Naive thymus-derived CD4-positive, alpha-beta T cell (primary cell): ENCODE measurements at regions of chr12 and their contacts with region 1.

Region 1: DNA sequence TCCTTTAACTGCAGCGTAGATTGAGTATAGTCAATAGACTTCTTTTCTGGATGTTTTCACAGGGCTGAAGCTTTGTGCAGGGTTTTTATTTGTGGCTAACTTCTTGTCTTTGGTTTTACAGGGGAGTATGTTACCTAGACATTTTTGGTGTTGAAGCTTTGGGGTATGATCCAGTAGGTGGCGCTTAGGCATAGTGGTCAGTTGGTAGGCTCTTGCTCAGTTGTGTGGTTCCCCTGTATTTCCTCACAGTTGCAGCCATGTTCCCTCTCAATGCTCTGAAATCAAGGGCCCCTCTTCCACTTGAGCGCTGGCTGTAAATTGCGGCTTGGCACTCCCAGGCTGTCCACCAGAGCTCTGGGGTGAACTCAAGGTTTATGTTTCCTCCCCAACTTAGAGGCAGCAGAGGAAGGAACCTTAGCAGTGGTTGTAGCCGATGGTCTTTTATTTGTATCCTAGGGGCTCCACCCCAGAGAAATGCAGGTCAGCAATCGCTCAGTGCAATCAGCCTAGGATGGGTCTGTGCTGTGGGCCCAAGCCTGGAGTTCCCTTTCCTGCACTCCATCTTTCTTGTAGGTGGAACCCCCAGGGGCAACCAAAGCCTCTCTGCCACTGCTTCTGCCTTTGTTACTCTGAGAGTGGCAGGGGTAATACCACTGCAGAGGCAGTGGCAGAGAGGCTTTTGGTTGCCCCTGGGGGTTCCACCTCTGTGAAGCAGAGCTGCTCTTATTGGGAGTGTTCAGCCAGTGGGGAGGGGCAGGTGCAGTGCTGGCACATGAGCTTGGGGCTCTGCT is 55.1 kb downstream of the CMAS start:
- DNase-seq: peak in 6 of 9 donors; percentile 12 to 47 (median 40)
- ATAC-seq: peak; percentile 78
- H3K4me3 ChIP-seq: no peak overlapping the region
- H3K4me3 Mint-ChIP-seq: no peak overlapping the region
- H3K27ac ChIP-seq: no peak overlapping the region
- H3K27ac Mint-ChIP-seq: no peak overlapping the region
- H3K4me1 ChIP-seq: peaks cover 0 to 4% of the 10 kb centered on the region in 2 donors
- H3K4me1 Mint-ChIP-seq: peaks cover 0 to 15% (median 6%) of the 10 kb centered on the region in 7 donors
- H3K27me3 ChIP-seq: no peaks in the 10 kb centered on the region
- H3K27me3 Mint-ChIP-seq: peaks cover 0 to 25% (median 0%) of the 10 kb centered on the region in 5 donors

Region 2: DNA sequence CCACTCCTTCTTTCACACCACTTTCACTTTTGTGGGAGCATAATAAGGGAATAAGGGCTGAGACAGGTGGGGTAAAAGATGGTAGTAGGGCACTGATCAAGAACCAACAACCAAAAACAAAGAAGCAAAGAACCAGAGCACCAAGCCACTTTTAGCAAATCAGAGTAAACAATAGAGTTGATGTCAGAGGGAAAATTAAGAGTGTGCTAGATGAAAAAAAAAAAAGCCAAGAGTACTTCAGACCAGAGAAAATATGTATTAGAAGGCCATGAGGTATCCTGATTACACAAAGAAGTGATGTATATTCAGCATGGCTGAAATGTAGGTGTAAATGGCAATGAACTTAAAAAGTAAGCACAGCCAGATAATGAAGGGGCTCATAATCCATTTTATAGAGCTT is 235.3 kb before region 1 on chr12:
- CTCF ChIA-PET with region 1: no interaction called
- POLR2A ChIA-PET with region 1: no interaction called
- intact Hi-C with region 1: no loop called
- DNase-seq: no peak
- ATAC-seq: no peak
- H3K4me3 ChIP-seq: no peak overlapping the region
- H3K4me3 Mint-ChIP-seq: no peak overlapping the region
- H3K27ac ChIP-seq: no peak overlapping the region
- H3K27ac Mint-ChIP-seq: no peak overlapping the region
- H3K4me1 ChIP-seq: no peaks in the 10 kb centered on the region
- H3K4me1 Mint-ChIP-seq: no peaks in the 10 kb centered on the region
- H3K27me3 ChIP-seq: no peaks in the 10 kb centered on the region
- H3K27me3 Mint-ChIP-seq: peaks cover 0 to 14% (median 4%) of the 10 kb centered on the region in 5 donors

Region 3: DNA sequence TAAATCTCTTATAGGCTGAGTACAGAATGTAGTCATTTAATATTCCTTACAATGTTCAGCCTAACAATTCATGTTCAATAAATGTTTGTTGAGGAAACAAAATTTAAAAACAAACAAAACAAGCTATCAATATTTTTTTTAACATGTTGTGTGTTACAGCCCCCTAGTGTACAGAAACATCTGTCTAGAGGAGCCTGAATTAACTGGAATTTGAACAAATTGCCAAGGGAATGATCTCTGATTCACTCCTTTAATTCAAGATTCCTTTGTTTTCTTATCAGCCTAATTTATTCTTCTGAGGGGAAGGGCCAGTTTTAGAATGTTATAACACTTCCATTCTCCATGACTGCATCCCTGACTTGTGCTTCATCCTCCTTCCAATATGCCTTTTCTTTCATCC is 72.0 kb after region 1 on chr12:
- CTCF ChIA-PET with region 1: interaction called, 16 read pairs
- POLR2A ChIA-PET with region 1: interaction called, 3 read pairs
- intact Hi-C with region 1: loop called (anchors 1 kb)
- DNase-seq: peak in 2 of 9 donors; percentile 6 to 12
- ATAC-seq: no peak
- H3K4me3 ChIP-seq: no peak overlapping the region
- H3K4me3 Mint-ChIP-seq: no peak overlapping the region
- H3K27ac ChIP-seq: no peak overlapping the region
- H3K27ac Mint-ChIP-seq: no peak overlapping the region
- H3K4me1 ChIP-seq: no peaks in the 10 kb centered on the region
- H3K4me1 Mint-ChIP-seq: peaks cover 2 to 8% (median 6%) of the 10 kb centered on the region in 7 donors
- H3K27me3 ChIP-seq: no peaks in the 10 kb centered on the region
- H3K27me3 Mint-ChIP-seq: peaks cover 0 to 2% (median 0%) of the 10 kb centered on the region in 5 donors

Region 4: GRCh38 chr12:22255097-22255496 is 153.9 kb after region 1 on chr12:
- CTCF ChIA-PET with region 1: no interaction called
- POLR2A ChIA-PET with region 1: no interaction called
- intact Hi-C with region 1: loop called in 1 of 2 experiments (anchors 10 kb)
- DNase-seq: no peak
- ATAC-seq: no peak
- H3K4me3 ChIP-seq: no peak overlapping the region
- H3K4me3 Mint-ChIP-seq: no peak overlapping the region
- H3K27ac ChIP-seq: no peak overlapping the region
- H3K27ac Mint-ChIP-seq: no peak overlapping the region
- H3K4me1 ChIP-seq: no peaks in the 10 kb centered on the region
- H3K4me1 Mint-ChIP-seq: peaks cover 0 to 5% (median 2%) of the 10 kb centered on the region in 7 donors
- H3K27me3 ChIP-seq: no peaks in the 10 kb centered on the region
- H3K27me3 Mint-ChIP-seq: peaks cover 0 to 7% (median 0%) of the 10 kb centered on the region in 5 donors